BJ (cell line): ENCODE measurements at regions of chr10 and their contacts with region 1.

Region 1: GRCh38 chr10:9342885-9343570 is 1288.5 kb downstream of the GATA3 start:
- DNase-seq: no peak
- H3K4me3 ChIP-seq: no peak overlapping the region
- H3K27me3 ChIP-seq: no peaks in the 10 kb centered on the region
- CTCF ChIP-seq: peak; percentile 74

Region 2: DNA sequence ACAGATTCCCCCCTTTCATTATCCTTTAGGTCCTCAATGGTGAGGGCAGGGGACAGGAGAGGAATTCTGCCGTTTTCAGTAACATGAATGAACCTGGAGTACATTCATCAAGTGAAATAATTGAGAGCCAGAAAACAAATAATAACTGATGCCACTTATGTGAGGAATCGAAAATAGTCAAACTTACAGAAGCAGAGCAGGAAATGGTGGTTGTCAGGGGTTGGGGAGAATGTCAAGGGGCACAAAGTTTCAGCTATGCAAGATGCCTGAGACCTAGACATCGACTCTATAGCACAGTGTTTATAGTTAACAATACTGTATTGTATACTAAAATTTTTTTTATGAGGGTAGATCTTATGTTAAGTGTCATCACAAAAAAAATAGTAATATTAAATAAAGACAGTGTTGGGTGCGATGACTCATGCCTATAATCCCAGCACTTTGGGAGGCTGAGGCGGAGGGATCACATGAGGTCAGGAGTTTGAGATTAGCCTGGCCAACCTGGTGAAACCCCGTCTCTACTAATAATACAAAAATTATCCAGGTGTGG is 68.7 kb before region 1 on chr10:
- CTCF ChIA-PET with region 1: no interaction called
- POLR2A ChIA-PET with region 1: no interaction called
- DNase-seq: no peak
- H3K4me3 ChIP-seq: no peak overlapping the region
- H3K27me3 ChIP-seq: no peaks in the 10 kb centered on the region; the same call in 1 of the 2 replicates
- CTCF ChIP-seq: no peak

Region 3: GRCh38 chr10:11036407-11037011 is 1693.5 kb after region 1 on chr10:
- CTCF ChIA-PET with region 1: interaction called, 10 read pairs
- POLR2A ChIA-PET with region 1: no interaction called
- DNase-seq: no peak
- H3K4me3 ChIP-seq: no peak overlapping the region
- H3K27me3 ChIP-seq: no peaks in the 10 kb centered on the region
- CTCF ChIP-seq: peak; percentile 71